SK-N-SH (cell line): ENCODE measurements at regions of chr1 and their contacts with region 1.

Region 1: DNA sequence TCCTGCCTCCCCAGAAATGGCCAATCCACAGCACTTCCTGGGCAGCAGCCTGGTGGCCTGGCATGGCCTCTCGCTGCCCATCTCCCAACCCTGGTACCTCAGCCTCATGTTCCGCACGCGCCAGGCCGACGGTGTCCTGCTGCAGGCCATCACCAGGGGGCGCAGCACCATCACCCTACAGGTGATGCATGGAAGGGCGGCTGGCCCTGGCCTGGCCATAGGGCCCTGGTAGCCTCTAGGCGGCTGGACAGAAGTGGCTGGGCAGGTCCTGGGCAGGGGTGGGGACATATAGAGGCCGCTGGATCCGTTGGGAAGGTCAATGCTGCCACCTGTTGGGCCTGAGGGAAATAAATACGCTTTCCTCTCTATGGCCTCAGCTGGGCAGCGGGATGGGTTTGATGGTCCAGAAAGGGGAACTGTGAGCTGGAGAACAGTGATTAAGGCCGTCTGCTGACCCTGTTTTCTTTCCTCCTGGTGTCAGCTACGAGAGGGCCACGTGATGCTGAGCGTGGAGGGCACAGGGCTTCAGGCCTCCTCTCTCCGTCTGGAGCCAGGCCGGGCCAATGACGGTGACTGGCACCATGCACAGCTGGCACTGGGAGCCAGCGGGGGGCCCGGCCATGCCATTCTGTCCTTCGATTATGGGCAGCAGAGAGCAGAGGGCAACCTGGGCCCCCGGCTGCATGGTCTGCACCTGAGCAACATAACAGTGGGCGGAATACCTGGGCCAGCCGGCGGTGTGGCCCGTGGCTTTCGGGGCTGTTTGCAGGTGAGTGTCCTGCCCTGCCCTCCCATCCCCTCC is 14.5 kb downstream of the CELSR2 start:
- DNase-seq: peak; percentile 98
- H3K4me3 ChIP-seq: peak overlapping the region in 1 of 2 experiments; percentile 2; a peak in 1 of 4 replicates
- H3K27ac ChIP-seq: peak overlapping the region in 1 of 2 experiments; percentile 0; a peak in 1 of 4 replicates
- H3K4me1 ChIP-seq: peaks cover 0 to 22% of the 10 kb centered on the region in 2 experiments; a peak in 2 of 4 replicates
- H3K27me3 ChIP-seq: no peaks in the 10 kb centered on the region
- CTCF ChIP-seq: peak; percentile 92
- EP300 ChIP-seq: no peak
- RAD21 ChIP-seq: peak; percentile 87

Region 2: GRCh38 chr1:109213785-109214468 is 49.9 kb before region 1 on chr1 and contains the start of gene SARS1:
- CTCF ChIA-PET with region 1: interaction called, 11 read pairs
- POLR2A ChIA-PET with region 1: no interaction called
- DNase-seq: peak; percentile 97
- H3K4me3 ChIP-seq: peak within 1 kb of the TSS; percentile 88 to 89
- H3K27ac ChIP-seq: peak within 1 kb of the TSS; percentile 86 to 89
- H3K4me1 ChIP-seq: peaks cover 5 to 21% of the 10 kb centered on the region in 2 experiments; a peak in 3 of 4 replicates
- H3K27me3 ChIP-seq: no peaks in the 10 kb centered on the region
- CTCF ChIP-seq: no peak
- EP300 ChIP-seq: no peak
- RAD21 ChIP-seq: no peak
- polyA plus RNA-seq, gene SARS1: 98.3 and 106 TPM in 2 replicates

Region 3: DNA sequence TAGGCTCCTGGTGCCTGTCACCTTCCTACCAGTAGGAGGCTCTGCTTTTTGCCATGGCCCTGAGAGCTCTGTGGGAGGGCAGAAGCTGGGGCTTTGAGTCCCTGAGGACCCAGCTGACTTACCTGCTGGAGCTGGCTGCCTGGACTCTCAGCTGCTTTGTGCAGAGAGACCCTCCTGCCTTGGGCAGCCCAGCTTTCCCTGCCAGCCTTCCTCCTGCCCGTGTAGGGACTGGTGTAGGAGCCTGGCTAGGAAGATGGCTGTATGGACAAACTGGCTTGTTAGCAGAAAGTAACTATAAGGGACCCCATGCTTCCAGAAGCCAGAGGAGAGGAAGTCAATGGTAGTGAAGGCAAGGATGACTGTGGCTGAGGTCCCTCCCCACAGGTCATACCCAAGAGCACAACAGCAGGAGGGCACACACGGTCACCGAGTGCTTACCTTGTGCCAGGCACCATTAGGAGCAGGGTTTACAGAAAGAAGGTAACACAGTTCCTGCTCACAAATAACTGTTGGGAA is 24.2 kb before region 1 on chr1:
- CTCF ChIA-PET with region 1: interaction called, 33 read pairs
- POLR2A ChIA-PET with region 1: no interaction called
- DNase-seq: peak; percentile 55
- H3K4me3 ChIP-seq: no peak overlapping the region
- H3K27ac ChIP-seq: peak overlapping the region; percentile 3 to 43; a peak in 2 of 4 replicates
- H3K4me1 ChIP-seq: peaks cover 11 to 14% of the 10 kb centered on the region in 2 experiments; a peak in 2 of 4 replicates
- H3K27me3 ChIP-seq: no peaks in the 10 kb centered on the region
- CTCF ChIP-seq: peak; percentile 53
- EP300 ChIP-seq: no peak
- RAD21 ChIP-seq: peak; percentile 28

Region 4: DNA sequence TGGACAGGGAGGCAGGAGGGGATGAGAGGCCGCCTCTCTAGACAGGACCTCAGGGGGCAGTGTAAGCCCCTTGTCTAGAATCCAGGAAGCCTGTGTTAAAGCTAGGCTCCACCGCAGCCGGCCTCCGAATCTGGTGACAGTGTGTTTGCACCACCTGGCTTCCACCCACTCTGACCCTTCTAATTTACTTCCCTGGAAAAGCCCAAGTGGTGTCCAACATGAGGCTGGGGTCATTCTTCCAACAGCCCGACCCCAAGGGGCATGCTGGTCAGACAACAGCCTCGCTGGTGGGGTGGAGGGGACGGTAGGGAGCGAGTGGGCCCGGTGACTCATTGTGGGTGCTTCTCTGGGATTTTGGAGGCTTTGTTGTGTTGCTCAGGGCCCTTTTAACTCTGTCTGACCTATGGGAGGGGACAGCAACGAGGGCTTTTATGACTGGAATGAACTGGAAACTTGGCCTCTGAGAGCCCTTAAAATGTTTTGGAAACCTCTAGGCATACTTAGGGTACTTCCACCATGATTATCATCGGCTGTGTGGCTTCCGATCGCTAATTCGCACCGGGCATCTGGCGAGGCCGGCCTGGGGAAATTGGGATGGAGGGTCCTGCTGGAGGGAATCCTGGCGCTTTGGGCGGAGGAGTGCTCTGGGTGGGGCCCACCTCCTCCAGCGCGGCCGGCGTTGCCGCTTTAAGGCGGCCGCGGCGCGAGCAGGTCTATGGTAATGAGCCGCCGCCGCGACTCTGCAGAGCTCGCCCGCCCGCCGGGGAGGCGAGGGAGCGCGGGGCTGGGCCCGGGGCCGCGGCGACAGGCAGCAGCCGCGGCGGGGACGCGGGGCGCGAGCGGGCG is 14.8 kb before region 1 on chr1 and contains the start of gene CELSR2:
- CTCF ChIA-PET with region 1: interaction called, 39 read pairs
- POLR2A ChIA-PET with region 1: no interaction called
- DNase-seq: peak; percentile 95
- H3K4me3 ChIP-seq: peak within 1 kb of the TSS; percentile 58 to 70
- H3K27ac ChIP-seq: peak within 1 kb of the TSS in 1 of 2 experiments; percentile 62; a peak in 1 of 4 replicates
- H3K4me1 ChIP-seq: peaks cover 0 to 31% of the 10 kb centered on the region in 2 experiments; a peak in 1 of 4 replicates
- H3K27me3 ChIP-seq: no peaks in the 10 kb centered on the region
- CTCF ChIP-seq: no peak; the same call in 1 of the 2 replicates
- EP300 ChIP-seq: no peak
- RAD21 ChIP-seq: no peak
- polyA plus RNA-seq, gene CELSR2: 1.7 and 3.5 TPM in 2 replicates

Region 5: GRCh38 chr1:109277434-109278204 is 13.8 kb after region 1 on chr1:
- CTCF ChIA-PET with region 1: interaction called, 33 read pairs
- POLR2A ChIA-PET with region 1: no interaction called
- DNase-seq: peak; percentile 88
- H3K4me3 ChIP-seq: no peak overlapping the region; a peak in 1 of 4 replicates
- H3K27ac ChIP-seq: peak overlapping the region in 1 of 2 experiments; percentile 44; a peak in 2 of 4 replicates
- H3K4me1 ChIP-seq: peaks cover 15 to 38% of the 10 kb centered on the region in 2 experiments
- H3K27me3 ChIP-seq: no peaks in the 10 kb centered on the region
- CTCF ChIP-seq: peak; percentile 90
- EP300 ChIP-seq: no peak
- RAD21 ChIP-seq: peak; percentile 77

Region 6: DNA sequence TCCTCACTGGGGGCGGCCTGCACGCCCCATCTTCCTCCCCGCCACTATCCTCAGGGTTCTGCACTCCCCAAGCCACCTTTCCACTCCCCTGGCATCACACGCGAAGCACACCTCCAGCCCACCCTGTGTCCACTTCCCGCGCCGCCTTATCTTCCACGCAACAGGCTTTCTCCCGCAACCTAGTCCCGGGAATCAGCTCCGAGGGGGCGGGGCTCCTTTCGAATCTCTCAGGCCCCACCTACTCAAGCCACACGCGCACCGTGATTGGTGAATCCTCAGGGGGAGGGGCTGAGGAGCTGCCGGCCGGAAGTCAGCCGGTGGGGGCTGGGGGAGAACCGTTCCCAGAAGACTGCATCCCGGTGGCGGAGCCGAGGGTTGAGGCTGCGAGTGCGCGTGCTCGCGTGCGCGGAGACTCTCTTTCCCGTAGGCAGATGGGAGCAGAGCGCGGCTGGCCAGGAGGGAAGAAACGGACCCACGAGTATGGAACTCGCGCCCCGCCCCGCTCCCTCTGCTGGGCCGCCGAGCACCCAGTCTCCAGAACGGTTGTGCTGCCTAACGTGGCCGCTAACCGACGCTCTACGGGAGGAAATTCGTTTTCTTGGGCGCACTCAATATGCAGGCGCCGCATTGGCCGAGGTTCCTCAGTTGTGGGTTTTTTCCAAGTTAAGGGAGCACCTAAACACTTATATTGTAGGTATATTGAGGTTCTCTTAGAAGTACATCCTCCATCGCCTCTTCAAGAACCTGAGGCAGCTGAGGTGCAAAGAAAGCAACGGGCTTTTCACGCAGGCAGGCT is 19.4 kb after region 1 on chr1 and contains the start of gene PSRC1:
- CTCF ChIA-PET with region 1: interaction called, 33 read pairs
- POLR2A ChIA-PET with region 1: no interaction called
- DNase-seq: peak; percentile 99
- H3K4me3 ChIP-seq: peak within 1 kb of the TSS; percentile 69 to 84
- H3K27ac ChIP-seq: peak within 1 kb of the TSS; percentile 73 to 96
- H3K4me1 ChIP-seq: peaks cover 0 to 18% of the 10 kb centered on the region in 2 experiments; a peak in 1 of 4 replicates
- H3K27me3 ChIP-seq: no peaks in the 10 kb centered on the region
- CTCF ChIP-seq: peak; percentile 46
- EP300 ChIP-seq: no peak; a peak in 1 of 4 replicates
- RAD21 ChIP-seq: no peak
- polyA plus RNA-seq, gene PSRC1: 19.4 and 20.3 TPM in 2 replicates